PC-3 (cell line): ENCODE measurements at regions of chr10 and their contacts with region 1.

Region 1: DNA sequence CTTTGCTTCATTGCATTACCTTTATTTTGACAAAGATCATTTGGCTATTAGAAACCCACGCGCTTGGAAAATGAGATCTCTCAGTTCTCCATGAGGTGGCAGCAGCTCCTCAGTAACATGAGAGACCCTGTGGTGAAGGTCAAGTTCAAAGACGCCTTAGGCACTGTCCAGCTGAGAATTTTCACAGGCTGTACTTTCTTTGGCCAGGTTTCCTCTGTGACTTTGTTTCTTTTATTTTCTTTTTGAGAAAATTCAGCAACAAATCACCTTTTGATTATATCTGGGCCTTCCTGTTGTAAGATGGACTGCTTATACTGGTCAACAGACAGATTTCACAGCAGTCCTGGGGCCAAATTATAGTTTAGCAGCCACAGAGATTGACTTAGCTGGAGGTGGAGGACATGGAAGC is 54.5 kb downstream of the RAB18 start:
- DNase-seq: peak; percentile 69
- ATAC-seq: peak; percentile 76
- H3K4me3 ChIP-seq: no peak overlapping the region
- H3K27ac ChIP-seq: no peak overlapping the region
- H3K4me1 ChIP-seq: no peaks in the 10 kb centered on the region
- H3K27me3 ChIP-seq: no peaks in the 10 kb centered on the region
- CTCF ChIP-seq: peak; percentile 81

Region 2: DNA sequence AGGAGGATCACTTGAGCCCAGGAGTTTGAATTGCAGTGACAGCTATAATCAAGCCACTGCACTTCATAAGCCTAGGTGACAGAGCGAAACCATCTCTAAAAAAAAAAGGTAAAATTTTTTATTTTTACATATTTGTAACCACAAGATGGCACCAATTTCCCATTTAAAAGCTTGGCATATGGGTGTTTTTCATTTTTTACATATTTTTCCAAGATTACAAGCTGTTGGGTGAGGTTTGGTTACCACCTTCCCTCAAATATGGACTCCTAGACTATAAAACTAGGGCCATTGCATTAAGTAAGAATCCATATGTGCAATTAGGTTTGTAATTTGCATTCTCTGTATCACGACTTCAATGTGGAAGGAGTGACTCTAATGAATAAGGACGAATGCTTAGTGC is 188.7 kb before region 1 on chr10:
- CTCF ChIA-PET with region 1: interaction called, 6 read pairs
- POLR2A ChIA-PET with region 1: no interaction called
- intact Hi-C with region 1: loop called (anchors 5 kb)
- DNase-seq: peak; percentile 41
- ATAC-seq: peak; percentile 20; the same call in 1 of the 2 replicates
- H3K4me3 ChIP-seq: no peak overlapping the region
- H3K27ac ChIP-seq: no peak overlapping the region
- H3K4me1 ChIP-seq: peaks cover 10% of the 10 kb centered on the region
- H3K27me3 ChIP-seq: no peaks in the 10 kb centered on the region
- CTCF ChIP-seq: peak; percentile 56; the same call in 1 of the 2 replicates

Region 3: GRCh38 chr10:27446091-27446918 is 112.3 kb before region 1 on chr10:
- CTCF ChIA-PET with region 1: no interaction called
- POLR2A ChIA-PET with region 1: no interaction called
- intact Hi-C with region 1: loop called (anchors 10 kb)
- DNase-seq: peak; percentile 51
- ATAC-seq: peak; percentile 56
- H3K4me3 ChIP-seq: no peak overlapping the region; the same call in 1 of the 2 replicates
- H3K27ac ChIP-seq: no peak overlapping the region
- H3K4me1 ChIP-seq: 0 out of 2 replicates have a peak, but pooled peaks cover 3% of the 10 kb centered on the region
- H3K27me3 ChIP-seq: no peaks in the 10 kb centered on the region
- CTCF ChIP-seq: peak; percentile 53

Region 4: GRCh38 chr10:27661514-27662286 is 103.1 kb after region 1 on chr10:
- CTCF ChIA-PET with region 1: no interaction called
- POLR2A ChIA-PET with region 1: no interaction called
- intact Hi-C with region 1: loop called (anchors 1 kb)
- DNase-seq: peak; percentile 60
- ATAC-seq: no peak
- H3K4me3 ChIP-seq: no peak overlapping the region
- H3K27ac ChIP-seq: 0 out of 2 replicates have a peak overlapping the region, but pooled peaks have one; percentile 14
- H3K4me1 ChIP-seq: peaks cover 11% of the 10 kb centered on the region
- H3K27me3 ChIP-seq: no peaks in the 10 kb centered on the region
- CTCF ChIP-seq: no peak

Region 5: GRCh38 chr10:27724287-27724686 is 165.7 kb after region 1 on chr10:
- CTCF ChIA-PET with region 1: no interaction called
- POLR2A ChIA-PET with region 1: no interaction called
- intact Hi-C with region 1: loop called (anchors 10 kb)
- DNase-seq: peak; percentile 17
- ATAC-seq: no peak; the same call in 1 of the 2 replicates
- H3K4me3 ChIP-seq: no peak overlapping the region
- H3K27ac ChIP-seq: no peak overlapping the region
- H3K4me1 ChIP-seq: no peaks in the 10 kb centered on the region
- H3K27me3 ChIP-seq: no peaks in the 10 kb centered on the region
- CTCF ChIP-seq: peak; percentile 62; the same call in 1 of the 2 replicates

Region 6: GRCh38 chr10:27742195-27743011 is 183.8 kb after region 1 on chr10:
- CTCF ChIA-PET with region 1: interaction called, 16 read pairs
- POLR2A ChIA-PET with region 1: no interaction called
- intact Hi-C with region 1: no loop called
- DNase-seq: peak; percentile 75
- ATAC-seq: peak; percentile 48
- H3K4me3 ChIP-seq: peak overlapping the region; percentile 86
- H3K27ac ChIP-seq: peak overlapping the region; percentile 68
- H3K4me1 ChIP-seq: peaks cover 16% of the 10 kb centered on the region; the same call in 1 of the 2 replicates
- H3K27me3 ChIP-seq: peaks cover 16% of the 10 kb centered on the region
- CTCF ChIP-seq: peak; percentile 65

Region 7: DNA sequence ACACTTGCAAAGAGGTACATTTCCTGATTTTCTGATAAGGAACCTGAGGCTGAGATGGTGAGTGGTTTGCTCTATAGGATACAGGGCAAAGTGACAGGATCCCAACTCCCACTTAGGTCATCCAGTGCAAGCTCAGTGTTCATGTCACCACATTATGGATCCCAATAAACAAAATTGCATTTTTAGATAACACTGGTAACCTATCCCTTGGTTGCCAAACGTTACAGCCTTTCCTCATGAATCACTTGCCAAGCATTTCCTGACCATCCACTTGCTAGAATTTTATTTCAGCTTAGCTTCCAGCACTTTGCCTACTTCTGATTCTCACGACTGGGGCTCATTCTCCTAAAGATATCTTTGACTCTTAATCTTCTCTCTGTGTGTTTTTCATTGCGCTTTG is 571.7 kb after region 1 on chr10:
- CTCF ChIA-PET with region 1: no interaction called
- POLR2A ChIA-PET with region 1: no interaction called
- intact Hi-C with region 1: no loop called
- DNase-seq: peak; percentile 68
- ATAC-seq: peak; percentile 78
- H3K4me3 ChIP-seq: no peak overlapping the region
- H3K27ac ChIP-seq: peak overlapping the region; percentile 66
- H3K4me1 ChIP-seq: peaks cover 24% of the 10 kb centered on the region
- H3K27me3 ChIP-seq: no peaks in the 10 kb centered on the region
- CTCF ChIP-seq: no peak